Calu3 (cell line): ENCODE measurements at regions of chr10 and their contacts with region 1.

Region 1: DNA sequence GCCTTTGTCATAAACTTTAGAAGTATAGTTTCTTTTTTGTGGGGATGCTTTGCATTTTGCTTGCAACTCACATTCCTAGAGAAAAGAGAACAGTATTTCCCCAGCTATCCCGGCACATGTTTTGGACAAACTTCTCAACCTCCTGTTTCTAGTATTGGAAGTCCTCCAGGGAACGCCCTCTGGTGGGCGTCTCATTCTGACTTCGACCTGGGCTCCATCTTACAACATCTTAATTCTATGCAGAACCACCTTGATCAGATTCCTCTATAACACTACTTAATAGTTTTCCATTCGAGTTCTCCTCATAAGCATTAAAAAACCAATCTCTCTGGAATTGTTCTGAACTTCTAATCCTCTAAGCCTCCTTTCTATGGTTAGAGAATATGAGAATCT is 139.5 kb upstream of the FZD8 start:
- DNase-seq: peak; percentile 45
- H3K4me3 Mint-ChIP-seq: no peak overlapping the region
- H3K27ac Mint-ChIP-seq: no peak overlapping the region
- H3K4me1 Mint-ChIP-seq: peaks cover 18% of the 10 kb centered on the region
- H3K27me3 Mint-ChIP-seq: no peaks in the 10 kb centered on the region
- CTCF ChIP-seq: peak; percentile 18

Region 2: GRCh38 chr10:35765996-35766395 is 15.6 kb before region 1 on chr10:
- CTCF ChIA-PET with region 1: interaction called, 4 read pairs
- intact Hi-C with region 1: loop called (anchors 1 kb)
- DNase-seq: no peak
- H3K4me3 Mint-ChIP-seq: no peak overlapping the region
- H3K27ac Mint-ChIP-seq: no peak overlapping the region
- H3K4me1 Mint-ChIP-seq: peaks cover 48% of the 10 kb centered on the region
- H3K27me3 Mint-ChIP-seq: no peaks in the 10 kb centered on the region
- CTCF ChIP-seq: no peak

Region 3: DNA sequence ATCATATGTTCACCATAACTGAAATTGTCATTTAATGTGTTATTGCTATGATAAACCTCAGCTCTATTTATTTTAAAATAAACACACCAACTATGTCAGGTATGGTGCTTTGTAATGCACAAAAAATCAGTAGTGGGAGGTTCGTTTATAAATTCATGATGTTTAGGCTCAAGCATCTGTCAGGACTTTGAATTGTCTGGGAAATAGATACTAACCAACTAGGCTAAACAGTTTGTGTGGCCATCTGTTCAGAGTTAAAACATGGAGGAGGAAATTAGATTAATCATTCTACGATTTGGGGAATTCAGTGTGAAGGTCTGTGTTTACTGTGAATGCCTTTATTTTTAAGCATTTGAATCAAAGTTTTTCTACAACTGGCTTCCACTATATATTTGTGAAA is 73.0 kb after region 1 on chr10:
- CTCF ChIA-PET with region 1: no interaction called
- intact Hi-C with region 1: no loop called
- DNase-seq: no peak
- H3K4me3 Mint-ChIP-seq: no peak overlapping the region
- H3K27ac Mint-ChIP-seq: no peak overlapping the region
- H3K4me1 Mint-ChIP-seq: no peaks in the 10 kb centered on the region
- H3K27me3 Mint-ChIP-seq: no peaks in the 10 kb centered on the region
- CTCF ChIP-seq: no peak